ENCODE measurements at regions of chr20 and their contacts with region 1.

Region 1: DNA sequence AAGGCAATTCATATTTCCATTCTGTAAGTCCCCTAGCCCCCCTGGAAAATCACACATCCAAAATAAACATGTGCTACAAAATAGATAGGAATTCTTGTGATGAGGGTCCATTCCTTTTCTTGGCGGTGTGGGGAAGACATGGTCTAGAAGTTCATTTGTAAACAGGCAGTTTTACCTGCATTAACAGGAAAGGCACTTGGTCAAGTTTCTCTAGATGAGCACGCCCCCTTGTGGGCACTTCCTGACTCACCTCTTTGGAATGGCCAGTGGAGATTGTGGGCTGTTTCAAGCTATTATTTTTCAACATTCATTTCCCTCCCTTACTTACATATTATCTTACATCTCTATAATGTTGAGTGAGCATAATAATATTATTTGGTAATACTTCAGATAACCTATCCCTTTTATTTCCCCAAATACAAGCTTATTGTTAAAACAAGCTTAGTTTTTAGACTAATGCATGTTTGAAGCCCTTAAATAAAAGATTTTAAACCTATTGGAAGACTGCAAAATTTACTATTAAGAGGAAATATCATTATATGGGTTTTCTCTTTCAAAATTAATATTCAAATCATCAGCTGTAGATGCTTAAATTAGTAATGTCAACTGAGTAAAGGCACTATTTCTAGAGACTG is 92.1 kb downstream of the TASP1 start:
- DNase-seq: peak; percentile 71
- ATAC-seq: peak; percentile 80
- H3K4me3 ChIP-seq: no peak overlapping the region
- H3K27ac ChIP-seq: no peak overlapping the region
- H3K4me1 ChIP-seq: peaks cover 2% of the 10 kb centered on the region; the same call in 1 of the 2 replicates
- H3K27me3 ChIP-seq: no peaks in the 10 kb centered on the region
- CTCF ChIP-seq: peak; percentile 75
- POLR2A ChIP-seq: no peak
- RAD21 ChIP-seq: peak; percentile 81

Region 2: DNA sequence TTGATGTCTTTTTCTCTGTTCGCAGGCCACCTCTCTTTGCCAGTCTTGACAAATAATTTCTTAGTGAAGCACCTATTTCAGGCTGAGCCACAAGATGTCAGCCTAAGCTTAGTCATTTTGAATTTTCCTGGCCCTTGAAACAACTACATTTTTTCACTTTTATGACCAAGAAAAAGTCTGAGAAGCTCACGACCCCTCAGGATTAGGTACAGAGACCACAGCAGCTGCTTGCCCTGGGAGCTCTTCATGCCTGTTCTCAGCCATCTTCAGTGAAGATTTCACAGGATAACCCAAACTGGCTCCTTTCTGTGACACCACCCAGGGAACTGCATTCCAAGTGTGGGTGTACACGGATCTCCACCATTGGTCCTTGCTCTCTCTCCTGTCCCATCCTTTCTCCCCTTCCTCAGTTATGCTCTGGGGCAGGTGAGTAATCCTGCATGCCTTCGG is 576.2 kb before region 1 on chr20:
- CTCF ChIA-PET with region 1: no interaction called
- POLR2A ChIA-PET with region 1: no interaction called
- dilution Hi-C with region 1: no loop called
- in situ Hi-C with region 1: no loop called
- intact Hi-C with region 1: loop called (anchors 1 kb)
- DNase-seq: peak; percentile 51
- ATAC-seq: peak; percentile 81
- H3K4me3 ChIP-seq: no peak overlapping the region
- H3K27ac ChIP-seq: no peak overlapping the region
- H3K4me1 ChIP-seq: no peaks in the 10 kb centered on the region; the same call in 1 of the 2 replicates
- H3K27me3 ChIP-seq: peaks cover 2% of the 10 kb centered on the region
- CTCF ChIP-seq: peak; percentile 74
- POLR2A ChIP-seq: no peak
- RAD21 ChIP-seq: peak; percentile 81

Region 3: GRCh38 chr20:13261460-13262301 is 284.9 kb before region 1 on chr20:
- CTCF ChIA-PET with region 1: no interaction called
- POLR2A ChIA-PET with region 1: no interaction called
- dilution Hi-C with region 1: no loop called
- in situ Hi-C with region 1: no loop called
- intact Hi-C with region 1: loop called (anchors 5 kb)
- DNase-seq: peak; percentile 21
- ATAC-seq: peak; percentile 87
- H3K4me3 ChIP-seq: no peak overlapping the region
- H3K27ac ChIP-seq: no peak overlapping the region
- H3K4me1 ChIP-seq: no peaks in the 10 kb centered on the region
- H3K27me3 ChIP-seq: no peaks in the 10 kb centered on the region; the same call in 1 of the 2 replicates
- CTCF ChIP-seq: peak; percentile 54
- POLR2A ChIP-seq: no peak
- RAD21 ChIP-seq: peak; percentile 27; the same call in 1 of the 2 replicates

Region 4: DNA sequence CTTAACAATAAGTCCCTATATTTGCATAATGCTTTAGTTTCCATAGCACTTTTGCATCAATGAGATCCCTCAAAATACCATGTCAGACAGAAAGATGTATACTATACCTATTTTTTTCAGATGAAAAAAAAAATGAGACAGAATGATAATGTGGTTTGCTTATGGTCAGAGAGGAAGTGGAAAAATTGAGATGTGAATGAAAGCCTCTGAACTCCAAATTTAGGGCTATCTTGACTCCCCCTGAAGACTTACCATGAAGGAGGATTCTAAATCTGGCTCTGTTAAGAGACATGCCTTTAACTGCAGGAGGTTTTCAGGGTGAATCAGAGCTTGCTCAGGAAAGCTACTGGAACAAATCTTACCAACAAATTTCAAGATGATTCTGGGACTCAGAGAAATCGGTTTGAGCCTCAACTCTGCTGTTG is 149.3 kb before region 1 on chr20:
- CTCF ChIA-PET with region 1: no interaction called
- POLR2A ChIA-PET with region 1: no interaction called
- dilution Hi-C with region 1: no loop called
- in situ Hi-C with region 1: no loop called
- intact Hi-C with region 1: loop called (anchors 5 kb)
- DNase-seq: peak; percentile 53
- ATAC-seq: peak; percentile 67
- H3K4me3 ChIP-seq: no peak overlapping the region
- H3K27ac ChIP-seq: no peak overlapping the region; the same call in 1 of the 2 replicates
- H3K4me1 ChIP-seq: peaks cover 6% of the 10 kb centered on the region
- H3K27me3 ChIP-seq: no peaks in the 10 kb centered on the region
- CTCF ChIP-seq: no peak
- POLR2A ChIP-seq: no peak
- RAD21 ChIP-seq: no peak

Region 5: GRCh38 chr20:13533946-13534345 is 12.7 kb before region 1 on chr20:
- CTCF ChIA-PET with region 1: interaction called, 19 read pairs
- POLR2A ChIA-PET with region 1: no interaction called
- dilution Hi-C with region 1: no loop called
- in situ Hi-C with region 1: no loop called
- intact Hi-C with region 1: no loop called
- DNase-seq: no peak
- ATAC-seq: no peak
- H3K4me3 ChIP-seq: no peak overlapping the region
- H3K27ac ChIP-seq: no peak overlapping the region
- H3K4me1 ChIP-seq: peaks cover 2% of the 10 kb centered on the region; the same call in 1 of the 2 replicates
- H3K27me3 ChIP-seq: no peaks in the 10 kb centered on the region
- CTCF ChIP-seq: no peak
- POLR2A ChIP-seq: no peak
- RAD21 ChIP-seq: no peak